Activated CD4-positive, alpha-beta memory T cell treated with anti-CD3 and anti-CD28 coated beads for 36 hours (primary cell): ENCODE measurements at regions of chr17 and their contacts with region 1.

Region 1: DNA sequence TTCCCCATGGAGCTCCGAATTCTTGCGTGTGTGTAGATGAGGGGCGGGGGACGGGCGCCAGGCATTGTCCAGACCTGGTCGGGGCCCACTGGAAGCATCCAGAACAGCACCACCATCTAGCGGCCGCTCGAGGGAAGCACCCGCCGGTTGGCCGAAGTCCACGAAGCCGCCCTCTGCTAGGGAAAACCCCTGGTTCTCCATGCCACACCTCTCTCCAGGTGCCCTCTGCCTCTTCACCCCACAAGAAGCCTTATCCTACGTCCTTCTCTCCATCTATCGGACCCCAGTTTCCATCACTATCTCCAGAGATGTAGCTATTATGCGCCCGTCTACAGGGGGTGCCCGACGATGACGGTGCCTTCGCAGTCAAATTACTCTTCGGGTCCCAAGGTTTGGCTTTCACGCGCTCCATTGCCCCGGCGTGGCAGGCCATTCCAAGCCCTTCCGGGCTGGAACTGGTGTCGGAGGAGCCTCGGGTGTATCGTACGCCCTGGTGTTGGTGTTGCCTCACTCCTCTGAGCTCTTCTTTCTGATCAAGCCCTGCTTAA is 617 bp upstream of the SENP3 start:
- DNase-seq: peak; percentile 92
- H3K4me3 Mint-ChIP-seq: peak overlapping the region; percentile 91
- H3K27ac Mint-ChIP-seq: peak overlapping the region; percentile 91
- H3K4me1 Mint-ChIP-seq: peaks cover 32% of the 10 kb centered on the region
- H3K27me3 Mint-ChIP-seq: no peaks in the 10 kb centered on the region

Region 2: GRCh38 chr17:7403977-7404736 is 156.9 kb before region 1 on chr17 and contains the start of gene TMEM256:
- CTCF ChIA-PET with region 1: interaction called, 13 read pairs
- POLR2A ChIA-PET with region 1: no interaction called
- intact Hi-C with region 1: no loop called
- DNase-seq: peak; percentile 99
- H3K4me3 Mint-ChIP-seq: peak within 1 kb of the TSS; percentile 97
- H3K27ac Mint-ChIP-seq: peak within 1 kb of the TSS; percentile 92
- H3K4me1 Mint-ChIP-seq: peaks cover 25% of the 10 kb centered on the region
- H3K27me3 Mint-ChIP-seq: no peaks in the 10 kb centered on the region
- total RNA-seq, gene TMEM256: 87.0 to 88.5 TPM

Region 3: DNA sequence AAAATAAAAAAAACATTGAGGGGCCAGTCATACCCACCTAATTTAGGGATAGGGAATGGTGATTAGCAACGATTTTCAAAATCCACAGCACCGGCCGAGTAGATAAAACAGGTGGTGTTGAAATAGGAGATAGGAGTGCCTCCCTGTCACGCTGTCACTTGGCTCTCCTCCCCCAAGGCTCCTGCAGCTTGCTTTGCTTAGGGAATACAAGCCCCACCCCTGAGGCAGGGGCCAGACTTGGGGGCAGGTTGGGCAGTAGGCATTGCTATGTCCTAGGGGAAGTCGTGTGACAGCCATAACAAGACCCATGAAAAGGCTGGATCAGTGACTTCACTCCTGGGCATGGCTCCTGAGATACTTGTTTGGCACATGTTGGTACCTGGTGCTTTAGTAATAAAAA is 51.2 kb before region 1 on chr17:
- CTCF ChIA-PET with region 1: interaction called, 148 read pairs
- POLR2A ChIA-PET with region 1: interaction called, 10 read pairs
- intact Hi-C with region 1: loop called (anchors 1 kb)
- DNase-seq: no peak
- H3K4me3 Mint-ChIP-seq: no peak overlapping the region
- H3K27ac Mint-ChIP-seq: no peak overlapping the region
- H3K4me1 Mint-ChIP-seq: no peaks in the 10 kb centered on the region
- H3K27me3 Mint-ChIP-seq: no peaks in the 10 kb centered on the region

Region 4: DNA sequence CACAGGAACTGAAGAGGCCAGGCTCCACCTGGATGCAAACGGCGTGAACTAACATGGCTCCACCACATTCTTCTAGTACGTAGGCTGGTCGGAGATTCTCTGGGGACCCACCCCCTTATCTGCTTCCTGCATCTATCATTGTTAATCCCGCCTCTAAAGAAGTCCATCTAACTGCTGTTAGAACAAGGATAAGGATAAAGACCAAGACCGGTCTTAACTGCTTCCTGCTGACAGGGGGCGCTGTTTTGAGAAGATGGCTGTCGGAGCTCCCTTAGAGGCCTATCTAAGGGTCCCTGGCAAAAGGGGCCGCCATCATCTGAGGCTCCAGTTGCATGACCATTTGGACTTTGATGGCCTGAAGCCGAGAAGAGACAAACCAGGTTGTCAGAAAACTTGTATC is 38.1 kb before region 1 on chr17:
- CTCF ChIA-PET with region 1: interaction called, 99 read pairs
- POLR2A ChIA-PET with region 1: interaction called, 6 read pairs
- intact Hi-C with region 1: loop called (anchors 1 kb)
- DNase-seq: peak; percentile 65
- H3K4me3 Mint-ChIP-seq: no peak overlapping the region
- H3K27ac Mint-ChIP-seq: no peak overlapping the region
- H3K4me1 Mint-ChIP-seq: peaks cover 4% of the 10 kb centered on the region
- H3K27me3 Mint-ChIP-seq: no peaks in the 10 kb centered on the region

Region 5: GRCh38 chr17:7548585-7549400 is 12.3 kb before region 1 on chr17 and contains the start of gene TNFSF12:
- CTCF ChIA-PET with region 1: interaction called, 37 read pairs
- POLR2A ChIA-PET with region 1: interaction called, 7 read pairs
- intact Hi-C with region 1: loop called (anchors 1 kb)
- DNase-seq: peak; percentile 76
- H3K4me3 Mint-ChIP-seq: peak within 1 kb of the TSS; percentile 80
- H3K27ac Mint-ChIP-seq: peak within 1 kb of the TSS; percentile 67
- H3K4me1 Mint-ChIP-seq: peaks cover 50% of the 10 kb centered on the region
- H3K27me3 Mint-ChIP-seq: no peaks in the 10 kb centered on the region
- total RNA-seq, gene TNFSF12: 19.7 to 22.4 TPM

Region 6: GRCh38 chr17:7583253-7584109 is 22.4 kb after region 1 on chr17 and contains the start of gene MPDU1:
- CTCF ChIA-PET with region 1: interaction called, 57 read pairs
- POLR2A ChIA-PET with region 1: interaction called, 12 read pairs
- intact Hi-C with region 1: loop called (anchors 1 kb)
- DNase-seq: peak; percentile 98
- H3K4me3 Mint-ChIP-seq: peak within 1 kb of the TSS; percentile 95
- H3K27ac Mint-ChIP-seq: peak within 1 kb of the TSS; percentile 100
- H3K4me1 Mint-ChIP-seq: peaks cover 57% of the 10 kb centered on the region
- H3K27me3 Mint-ChIP-seq: no peaks in the 10 kb centered on the region
- total RNA-seq, gene MPDU1: 52.6 to 52.9 TPM